CD4-positive, alpha-beta memory T cell (primary cell): ENCODE measurements at regions of chr4 and their contacts with region 1.

Region 1: DNA sequence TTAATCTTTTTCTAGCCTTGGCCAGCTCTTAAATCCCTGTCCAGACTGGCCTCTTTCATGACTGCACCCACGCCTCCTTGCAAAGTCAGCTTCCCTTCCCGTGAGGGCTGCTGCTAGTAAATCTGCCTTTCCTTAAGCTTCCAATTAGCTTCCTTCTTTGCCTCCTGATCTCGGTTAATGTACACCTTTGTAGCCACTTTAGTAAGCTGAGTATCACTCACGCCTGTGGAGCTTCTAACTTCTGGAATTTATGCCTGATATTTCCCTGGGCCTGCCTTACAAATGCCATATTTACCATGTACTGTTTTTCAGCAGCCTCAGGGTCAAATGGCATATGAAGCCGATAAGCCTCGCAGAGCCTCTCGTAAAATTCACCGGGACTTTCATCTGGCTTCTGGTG is 5.1 kb upstream of the UGT8 start:
- DNase-seq: no peak
- H3K4me3 ChIP-seq: no peak overlapping the region
- H3K4me3 Mint-ChIP-seq: no peak overlapping the region
- H3K27ac ChIP-seq: no peak overlapping the region
- H3K27ac Mint-ChIP-seq: peak overlapping the region in 1 of 7 donors; percentile 42
- H3K4me1 ChIP-seq: peaks cover 3% of the 10 kb centered on the region
- H3K4me1 Mint-ChIP-seq: peaks cover 2 to 6% (median 3%) of the 10 kb centered on the region in 4 donors
- H3K27me3 ChIP-seq: peaks cover 4% of the 10 kb centered on the region
- H3K27me3 Mint-ChIP-seq: peaks cover 9 to 11% of the 10 kb centered on the region in 2 donors

Region 2: DNA sequence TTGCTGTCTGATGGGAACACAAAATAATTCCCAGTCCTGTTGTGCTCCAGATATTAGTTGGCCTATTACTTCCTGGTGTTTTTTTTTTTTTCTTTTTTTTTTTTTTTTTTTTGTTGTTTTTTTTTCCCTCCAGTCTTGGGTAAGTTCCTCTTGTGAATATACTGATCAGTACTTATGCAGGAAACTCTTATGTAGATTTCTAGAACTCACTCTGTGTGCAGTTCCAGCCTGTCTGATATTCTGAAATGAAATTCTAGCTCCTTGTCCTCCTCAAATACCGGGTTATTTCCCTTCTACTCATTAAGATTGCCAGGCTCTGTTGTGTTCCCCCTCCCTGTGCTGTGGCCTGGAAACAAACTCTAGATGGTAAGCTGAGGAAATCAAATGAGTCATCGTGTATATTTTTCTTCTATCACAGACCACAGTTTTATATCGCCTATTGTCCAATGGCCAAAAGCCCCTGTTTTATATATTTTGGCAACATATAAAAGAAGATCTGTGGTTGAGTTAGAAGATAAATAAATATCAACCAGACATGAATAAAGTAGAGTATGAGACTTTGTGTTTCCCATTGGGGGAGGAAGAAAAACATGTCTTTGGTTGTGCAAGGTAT is 119.2 kb before region 1 on chr4:
- CTCF ChIA-PET with region 1: no interaction called
- POLR2A ChIA-PET with region 1: no interaction called
- intact Hi-C with region 1: no loop called
- DNase-seq: no peak
- H3K4me3 ChIP-seq: no peak overlapping the region
- H3K4me3 Mint-ChIP-seq: no peak overlapping the region
- H3K27ac ChIP-seq: no peak overlapping the region
- H3K27ac Mint-ChIP-seq: no peak overlapping the region
- H3K4me1 ChIP-seq: no peaks in the 10 kb centered on the region
- H3K4me1 Mint-ChIP-seq: no peaks in the 10 kb centered on the region
- H3K27me3 ChIP-seq: no peaks in the 10 kb centered on the region
- H3K27me3 Mint-ChIP-seq: no peaks in the 10 kb centered on the region

Region 3: GRCh38 chr4:114519368-114519767 is 74.2 kb before region 1 on chr4:
- CTCF ChIA-PET with region 1: no interaction called
- POLR2A ChIA-PET with region 1: no interaction called
- intact Hi-C with region 1: no loop called
- DNase-seq: no peak
- H3K4me3 ChIP-seq: no peak overlapping the region
- H3K4me3 Mint-ChIP-seq: no peak overlapping the region
- H3K27ac ChIP-seq: no peak overlapping the region
- H3K27ac Mint-ChIP-seq: no peak overlapping the region
- H3K4me1 ChIP-seq: no peaks in the 10 kb centered on the region
- H3K4me1 Mint-ChIP-seq: no peaks in the 10 kb centered on the region
- H3K27me3 ChIP-seq: no peaks in the 10 kb centered on the region
- H3K27me3 Mint-ChIP-seq: peaks cover 0 to 2% of the 10 kb centered on the region in 2 donors

Region 4: GRCh38 chr4:114582621-114583020 is 10.9 kb before region 1 on chr4:
- CTCF ChIA-PET with region 1: no interaction called
- POLR2A ChIA-PET with region 1: no interaction called
- intact Hi-C with region 1: loop called (anchors 1 kb)
- DNase-seq: no peak
- H3K4me3 ChIP-seq: no peak overlapping the region
- H3K4me3 Mint-ChIP-seq: no peak overlapping the region
- H3K27ac ChIP-seq: no peak overlapping the region
- H3K27ac Mint-ChIP-seq: no peak overlapping the region
- H3K4me1 ChIP-seq: no peaks in the 10 kb centered on the region
- H3K4me1 Mint-ChIP-seq: no peaks in the 10 kb centered on the region
- H3K27me3 ChIP-seq: no peaks in the 10 kb centered on the region
- H3K27me3 Mint-ChIP-seq: peaks cover 2% of the 10 kb centered on the region in 2 donors